Calu3 (cell line): ENCODE measurements at regions of chr2 and their contacts with region 1.

Region 1: GRCh38 chr2:33412920-33413319 is 63.5 kb upstream of the RASGRP3 start:
- DNase-seq: peak; percentile 22
- H3K4me3 Mint-ChIP-seq: no peak overlapping the region
- H3K27ac Mint-ChIP-seq: no peak overlapping the region
- H3K4me1 Mint-ChIP-seq: no peaks in the 10 kb centered on the region
- H3K27me3 Mint-ChIP-seq: no peaks in the 10 kb centered on the region
- CTCF ChIP-seq: peak; percentile 22

Region 2: DNA sequence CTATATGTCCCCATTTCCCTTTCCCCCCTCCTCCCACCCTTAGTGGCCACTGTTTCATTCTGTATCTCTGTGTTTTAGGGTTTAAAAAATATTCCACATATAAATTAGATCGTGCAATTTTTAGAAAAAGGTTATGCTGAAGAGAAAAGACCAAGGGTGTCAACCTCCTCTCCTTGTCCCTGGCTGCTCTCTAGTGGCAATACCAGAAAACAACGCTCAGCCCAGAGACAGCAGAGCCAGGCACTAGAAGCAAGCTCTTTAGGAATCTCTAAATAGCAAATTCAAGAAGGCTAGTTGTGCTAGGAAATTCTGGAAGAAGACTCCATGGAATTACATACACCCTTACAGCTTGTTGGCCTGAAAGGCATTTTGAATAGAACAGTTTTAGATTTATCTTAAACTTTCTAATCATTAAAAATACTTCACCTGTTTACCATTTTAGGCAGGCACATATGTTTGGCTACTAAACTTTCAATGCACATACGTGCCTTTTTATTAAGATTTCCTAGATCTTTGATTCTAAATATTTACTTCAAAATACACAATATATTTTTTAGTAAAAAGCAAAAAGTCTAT is 28.4 kb after region 1 on chr2:
- CTCF ChIA-PET with region 1: interaction called, 7 read pairs
- intact Hi-C with region 1: loop called (anchors 1 kb)
- DNase-seq: peak; percentile 49
- H3K4me3 Mint-ChIP-seq: no peak overlapping the region
- H3K27ac Mint-ChIP-seq: no peak overlapping the region
- H3K4me1 Mint-ChIP-seq: no peaks in the 10 kb centered on the region
- H3K27me3 Mint-ChIP-seq: no peaks in the 10 kb centered on the region
- CTCF ChIP-seq: peak; percentile 44

Region 3: DNA sequence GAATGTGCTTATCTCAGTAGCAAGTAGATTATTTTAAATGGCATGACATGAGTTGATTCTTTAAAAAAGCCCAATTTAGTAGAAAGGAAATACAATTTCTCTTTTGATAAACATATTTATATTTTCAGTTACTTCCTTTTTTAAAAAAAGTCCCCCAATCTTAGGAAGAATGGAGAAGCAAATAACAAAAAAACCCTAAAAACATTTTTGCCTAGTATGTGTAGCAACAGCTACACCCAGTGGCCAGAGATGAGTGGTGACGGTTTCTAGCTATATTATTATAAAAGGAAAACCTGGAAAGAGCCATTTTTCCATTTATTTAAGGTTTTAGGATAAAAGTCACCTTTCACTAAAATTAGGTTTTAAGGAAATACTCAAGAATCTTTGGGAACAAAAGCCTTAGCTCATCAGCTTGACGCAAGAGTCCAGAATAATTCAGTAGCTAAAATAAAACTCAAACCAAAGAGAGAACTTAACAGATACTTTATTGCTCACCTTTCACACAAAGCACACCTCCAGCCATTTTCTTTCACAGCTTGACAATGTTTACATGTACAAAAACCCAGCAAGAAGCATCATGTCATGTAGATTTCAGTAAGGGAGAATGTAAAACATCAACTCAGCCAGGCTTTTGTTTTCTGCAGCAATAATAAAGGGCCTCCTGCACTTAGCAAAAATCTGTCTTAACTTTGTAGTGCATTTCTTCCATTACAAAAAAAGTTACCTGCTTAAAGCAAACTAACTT is 170.4 kb after region 1 on chr2:
- CTCF ChIA-PET with region 1: interaction called, 19 read pairs
- intact Hi-C with region 1: loop called (anchors 1 kb)
- DNase-seq: peak; percentile 7
- H3K4me3 Mint-ChIP-seq: no peak overlapping the region
- H3K27ac Mint-ChIP-seq: no peak overlapping the region
- H3K4me1 Mint-ChIP-seq: no peaks in the 10 kb centered on the region
- H3K27me3 Mint-ChIP-seq: no peaks in the 10 kb centered on the region
- CTCF ChIP-seq: peak; percentile 47

Region 4: GRCh38 chr2:33666628-33667254 is 253.8 kb after region 1 on chr2:
- CTCF ChIA-PET with region 1: no interaction called
- intact Hi-C with region 1: no loop called
- DNase-seq: no peak
- H3K4me3 Mint-ChIP-seq: no peak overlapping the region
- H3K27ac Mint-ChIP-seq: no peak overlapping the region
- H3K4me1 Mint-ChIP-seq: no peaks in the 10 kb centered on the region
- H3K27me3 Mint-ChIP-seq: no peaks in the 10 kb centered on the region
- CTCF ChIP-seq: no peak